ENCODE measurements at regions of chr15 and their contacts with region 1.

Region 1: DNA sequence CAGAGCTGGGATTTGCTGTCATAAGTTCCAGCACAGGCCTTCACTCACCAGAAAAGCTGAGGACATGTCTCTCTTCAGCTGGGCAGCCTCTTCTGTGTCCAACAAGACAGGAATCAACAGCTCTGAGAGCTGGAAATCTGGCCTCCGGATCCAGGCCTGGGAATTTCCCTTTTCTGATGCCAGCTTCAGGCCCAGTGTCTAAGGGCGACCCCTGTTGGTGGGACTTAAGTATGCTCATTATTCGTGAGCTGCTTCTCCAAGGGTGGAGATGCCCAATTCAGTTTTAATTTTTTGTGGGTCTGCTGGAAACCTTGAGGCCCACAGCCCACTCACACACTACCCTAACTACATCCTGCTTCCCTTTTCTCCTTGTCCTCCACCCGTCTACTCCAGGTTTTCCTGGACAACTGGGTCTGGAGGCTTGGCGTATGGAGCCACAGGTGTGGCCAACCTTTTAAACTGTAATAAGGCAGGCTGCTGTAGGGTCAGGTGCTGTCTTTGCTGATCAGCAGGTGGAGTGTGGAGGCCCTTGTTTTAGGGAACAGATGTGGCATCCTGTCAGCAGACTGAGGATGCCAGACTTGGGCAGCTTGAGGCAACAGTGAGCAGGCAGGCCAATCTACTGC is 2.6 kb upstream of the CEMIP start:
- DNase-seq: peak; percentile 78 to 81
- H3K4me3 ChIP-seq: no peak overlapping the region
- H3K27ac ChIP-seq: no peak overlapping the region
- H3K4me1 ChIP-seq: peaks cover 18 to 38% of the 10 kb centered on the region in 2 donors
- H3K27me3 ChIP-seq: no peaks in the 10 kb centered on the region
- CTCF ChIP-seq: peak; percentile 65 to 87 (median 76)
- POLR2A ChIP-seq: no peak

Region 2: DNA sequence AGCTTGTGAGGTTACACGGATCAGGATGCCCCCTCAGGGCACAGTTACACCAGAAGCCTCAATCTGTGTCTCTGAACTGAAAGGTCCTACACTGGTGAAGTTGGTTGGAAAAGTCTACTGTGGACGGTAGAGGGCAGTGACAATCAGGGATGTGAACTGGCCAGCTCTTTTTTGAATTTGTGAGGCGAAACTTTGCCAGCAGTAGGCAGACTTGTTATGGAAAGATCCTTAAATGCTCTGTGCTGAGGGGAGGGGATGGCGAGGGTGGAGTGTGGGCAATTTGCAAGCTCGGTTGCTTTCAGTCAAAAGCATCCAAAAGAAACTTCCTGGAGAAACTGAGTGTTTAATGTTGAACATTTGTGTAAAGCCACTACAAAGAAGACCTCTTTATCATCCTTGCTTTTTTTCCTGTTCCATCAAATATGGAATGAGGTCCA is 208.8 kb before region 1 on chr15:
- intact Hi-C with region 1: loop called (anchors 5 kb)
- DNase-seq: peak; percentile 71 to 74
- H3K4me3 ChIP-seq: no peak overlapping the region
- H3K27ac ChIP-seq: no peak overlapping the region
- H3K4me1 ChIP-seq: peaks cover 0 to 7% of the 10 kb centered on the region in 2 donors
- H3K27me3 ChIP-seq: no peaks in the 10 kb centered on the region
- CTCF ChIP-seq: peak; percentile 45 to 88 (median 76)
- POLR2A ChIP-seq: no peak

Region 3: DNA sequence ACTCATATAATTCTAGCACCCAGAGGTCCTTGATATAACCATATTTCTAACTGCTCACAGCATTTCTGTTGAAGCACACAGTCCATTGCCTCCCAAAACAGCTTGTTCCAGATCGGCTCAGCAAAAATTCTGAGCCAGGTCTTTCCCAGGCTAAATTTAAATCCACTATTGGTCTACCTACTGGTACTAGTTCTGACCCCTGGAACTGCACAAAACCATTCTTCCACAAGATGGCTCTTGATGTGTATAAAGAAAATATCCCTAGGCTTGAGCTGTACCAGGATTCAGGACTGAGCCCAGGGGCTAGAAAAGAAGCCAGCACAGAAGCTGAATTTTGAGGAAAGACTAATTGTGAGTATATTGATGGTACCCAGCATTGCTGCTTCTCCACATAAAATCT is 156.9 kb before region 1 on chr15:
- intact Hi-C with region 1: loop called (anchors 10 kb)
- DNase-seq: peak; percentile 14 to 23
- H3K4me3 ChIP-seq: no peak overlapping the region
- H3K27ac ChIP-seq: peak overlapping the region in 1 of 3 donors; percentile 5
- H3K4me1 ChIP-seq: peaks cover 16 to 31% of the 10 kb centered on the region in 2 donors
- H3K27me3 ChIP-seq: no peaks in the 10 kb centered on the region
- CTCF ChIP-seq: peak in 4 of 6 experiments; percentile 24 to 48 (median 38)
- POLR2A ChIP-seq: no peak

Region 4: GRCh38 chr15:80970018-80970658 is 193.6 kb after region 1 on chr15:
- intact Hi-C with region 1: loop called (anchors 5 kb)
- DNase-seq: peak; percentile 44 to 71
- H3K4me3 ChIP-seq: no peak overlapping the region
- H3K27ac ChIP-seq: no peak overlapping the region
- H3K4me1 ChIP-seq: peaks cover 22 to 32% of the 10 kb centered on the region in 2 donors
- H3K27me3 ChIP-seq: no peaks in the 10 kb centered on the region
- CTCF ChIP-seq: peak; percentile 43 to 83 (median 77)
- POLR2A ChIP-seq: no peak